Psoas muscle (tissue), 8 donors: ENCODE measurements at regions of chr5 and their contacts with region 1.

Region 1: GRCh38 chr5:1140171-1140817 is 28.4 kb upstream of the SLC12A7 start:
- DNase-seq: peak; percentile 79 to 89
- ATAC-seq: peak; percentile 90 to 94 (median 91)
- H3K4me3 ChIP-seq: no peak overlapping the region
- H3K27ac ChIP-seq: no peak overlapping the region
- H3K4me1 ChIP-seq: no peaks in the 10 kb centered on the region
- H3K27me3 ChIP-seq: peaks cover 0 to 24% (median 6%) of the 10 kb centered on the region in 3 donors
- CTCF ChIP-seq: peak; percentile 86

Region 2: DNA sequence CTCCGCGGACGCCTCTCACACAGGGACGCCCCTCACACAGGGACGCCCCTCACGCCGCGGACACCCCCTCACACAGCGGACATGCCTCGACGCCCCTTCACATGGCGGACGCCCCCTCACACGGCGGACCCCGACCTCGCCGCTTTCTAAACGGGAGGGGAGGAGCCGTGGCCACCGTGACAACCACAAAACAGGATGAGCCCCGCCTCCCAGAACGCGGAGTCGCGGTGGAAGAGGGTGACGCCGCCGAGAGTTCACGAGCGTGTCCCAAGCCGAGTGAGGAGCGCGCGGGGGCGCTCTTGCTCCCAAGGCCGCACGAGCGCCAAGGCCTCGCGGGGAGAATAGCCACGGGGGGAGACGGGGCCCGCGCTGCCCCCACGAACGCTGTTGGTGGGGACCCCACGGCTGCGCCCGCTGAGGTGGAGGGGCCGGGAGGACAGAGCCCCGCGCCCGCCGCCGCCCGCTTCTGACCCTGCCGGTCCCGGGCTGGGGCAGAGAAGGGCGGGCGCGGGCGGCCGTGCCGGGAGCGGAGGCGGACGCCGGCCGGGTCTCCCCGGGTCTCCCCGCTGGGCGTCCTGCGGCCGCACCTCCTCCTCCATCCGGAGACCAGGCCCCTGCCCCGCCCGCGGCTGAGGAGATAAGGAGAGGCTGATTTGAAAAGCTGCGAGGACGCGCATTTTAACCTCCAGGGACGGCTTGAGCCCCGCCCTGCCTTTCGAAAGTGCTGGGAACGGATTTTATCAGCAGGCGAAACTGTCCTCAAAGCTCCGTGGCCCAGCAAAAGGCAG is 135.6 kb before region 1 on chr5:
- intact Hi-C with region 1: loop called (anchors 2 to 10 kb)
- DNase-seq: peak; percentile 84 to 87
- ATAC-seq: peak; percentile 68 to 84 (median 74)
- H3K4me3 ChIP-seq: peak overlapping the region; percentile 65
- H3K27ac ChIP-seq: no peak overlapping the region
- H3K4me1 ChIP-seq: no peaks in the 10 kb centered on the region
- H3K27me3 ChIP-seq: peaks cover 0 to 54% (median 13%) of the 10 kb centered on the region in 3 donors
- CTCF ChIP-seq: peak; percentile 35

Region 3: GRCh38 chr5:1026700-1027621 is 113.3 kb before region 1 on chr5:
- intact Hi-C with region 1: no loop called
- DNase-seq: peak in 1 of 2 donors; percentile 22
- ATAC-seq: no peak
- H3K4me3 ChIP-seq: no peak overlapping the region
- H3K27ac ChIP-seq: no peak overlapping the region
- H3K4me1 ChIP-seq: no peaks in the 10 kb centered on the region
- H3K27me3 ChIP-seq: peaks cover 0 to 40% (median 0%) of the 10 kb centered on the region in 3 donors
- CTCF ChIP-seq: no peak

Region 4: DNA sequence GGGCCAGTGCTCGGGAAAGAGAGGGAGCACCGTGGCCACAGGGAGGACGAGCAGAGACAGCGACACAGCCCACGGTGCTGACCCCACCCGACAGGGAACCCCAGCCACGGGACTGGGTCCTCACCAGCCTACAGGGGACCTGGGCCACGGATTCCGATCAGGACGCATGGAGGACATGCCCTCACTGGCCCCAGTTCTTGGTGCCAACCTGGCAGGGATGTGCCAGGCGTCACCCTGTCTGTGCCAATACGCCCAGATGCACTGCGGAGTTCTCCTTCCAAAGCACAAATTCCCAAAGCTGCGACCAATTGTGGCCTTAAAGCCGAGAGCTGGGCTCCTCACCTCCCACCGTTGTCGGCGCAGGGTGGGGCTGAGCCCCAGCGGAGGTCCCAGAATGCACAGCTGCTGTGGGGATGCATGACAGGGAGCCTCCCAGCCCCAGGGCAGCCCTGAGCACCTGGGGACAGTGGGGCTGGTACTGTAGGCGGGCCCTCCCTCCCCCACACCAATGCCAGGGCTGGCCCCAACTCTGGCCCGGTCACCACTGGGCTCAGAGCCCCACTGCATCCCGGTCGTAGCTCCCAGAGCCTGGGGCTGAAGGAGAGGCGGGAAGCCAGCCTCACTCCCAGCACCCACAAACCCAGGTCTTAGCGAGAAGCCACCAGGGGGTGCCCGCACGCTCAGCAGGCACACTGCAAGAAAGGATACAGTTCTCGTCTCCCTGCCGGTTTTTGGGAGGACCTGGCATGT is 87.5 kb before region 1 on chr5:
- intact Hi-C with region 1: loop called in 1 of 2 experiments (anchors 2 kb)
- DNase-seq: peak; percentile 21 to 51
- ATAC-seq: peak in 3 of 4 donors; percentile 7 to 41 (median 19)
- H3K4me3 ChIP-seq: no peak overlapping the region
- H3K27ac ChIP-seq: no peak overlapping the region
- H3K4me1 ChIP-seq: no peaks in the 10 kb centered on the region
- H3K27me3 ChIP-seq: peaks cover 0 to 27% (median 0%) of the 10 kb centered on the region in 3 donors
- CTCF ChIP-seq: peak; percentile 24